Uterus (tissue), 4 donors: ENCODE measurements at regions of chr15 and their contacts with region 1.

Region 1: GRCh38 chr15:98518823-98519561 is 129.3 kb upstream of the IGF1R start:
- DNase-seq: peak; percentile 40 to 62
- H3K4me3 ChIP-seq: no peak overlapping the region
- H3K27ac ChIP-seq: no peak overlapping the region
- H3K4me1 ChIP-seq: no peaks in the 10 kb centered on the region
- H3K27me3 ChIP-seq: no peaks in the 10 kb centered on the region
- CTCF ChIP-seq: peak; percentile 76 to 82 (median 80)
- POLR2A ChIP-seq: no peak

Region 2: DNA sequence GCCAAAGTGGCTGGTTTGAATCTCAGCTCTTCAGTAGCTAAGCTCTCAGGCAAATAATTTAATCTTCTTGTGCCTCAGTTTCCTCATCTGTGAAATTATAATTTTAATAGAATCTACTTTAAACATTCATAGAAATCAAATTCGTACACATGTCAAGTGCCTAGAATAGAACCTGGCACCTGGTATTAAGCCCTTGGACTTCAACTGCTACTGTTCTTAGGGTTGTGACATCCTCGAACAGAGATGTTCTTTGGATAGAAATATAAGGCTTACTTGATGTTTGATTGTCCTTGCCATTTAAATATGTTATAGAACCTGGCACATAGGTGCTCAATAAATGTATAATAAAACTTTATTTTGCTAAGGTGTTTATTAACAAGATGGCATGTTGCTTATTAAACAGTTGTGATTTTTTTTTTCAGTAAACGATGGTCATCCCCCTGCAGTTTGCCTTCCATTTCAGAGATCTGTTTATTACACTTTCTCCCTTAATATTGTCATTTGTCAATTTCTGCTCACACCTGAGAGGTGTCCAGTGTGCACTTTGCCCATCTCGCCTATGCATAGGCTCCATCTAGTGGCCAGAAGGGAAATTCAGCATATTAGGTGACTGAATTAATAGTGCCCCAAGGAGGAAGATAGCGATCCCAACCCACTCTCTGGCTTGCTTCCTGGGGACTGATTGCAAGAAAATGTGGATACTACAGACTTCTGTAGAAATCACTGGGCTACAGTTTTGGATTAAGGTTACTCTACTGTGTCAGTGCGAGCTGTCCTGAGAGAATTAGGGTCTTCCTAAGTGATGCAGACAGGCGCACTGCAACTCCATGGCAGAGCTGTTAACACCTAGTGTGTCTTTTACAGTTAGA is 140.1 kb after region 1 on chr15:
- intact Hi-C with region 1: loop called (anchors 5 kb)
- DNase-seq: peak; percentile 37 to 58
- H3K4me3 ChIP-seq: no peak overlapping the region
- H3K27ac ChIP-seq: peak overlapping the region in 1 of 2 donors; percentile 2
- H3K4me1 ChIP-seq: peaks cover 6 to 10% of the 10 kb centered on the region in 2 donors
- H3K27me3 ChIP-seq: no peaks in the 10 kb centered on the region
- CTCF ChIP-seq: peak; percentile 67 to 79 (median 74)
- POLR2A ChIP-seq: no peak

Region 3: GRCh38 chr15:99076552-99077308 is 557.7 kb after region 1 on chr15:
- intact Hi-C with region 1: loop called (anchors 10 kb)
- DNase-seq: peak; percentile 59 to 66
- H3K4me3 ChIP-seq: peak overlapping the region; percentile 22 to 26
- H3K27ac ChIP-seq: peak overlapping the region; percentile 37 to 67
- H3K4me1 ChIP-seq: no peaks in the 10 kb centered on the region
- H3K27me3 ChIP-seq: no peaks in the 10 kb centered on the region
- CTCF ChIP-seq: peak; percentile 87 to 90 (median 90)
- POLR2A ChIP-seq: no peak